Keratinocyte (primary cell): ENCODE measurements at regions of chr1 and their contacts with region 1.

Region 1: GRCh38 chr1:28845786-28846543 is 34.0 kb downstream of the OPRD1 start:
- DNase-seq: no peak
- H3K4me3 ChIP-seq: no peak overlapping the region
- H3K27ac ChIP-seq: no peak overlapping the region
- H3K4me1 ChIP-seq: no peaks in the 10 kb centered on the region
- H3K27me3 ChIP-seq: peaks cover 6% of the 10 kb centered on the region
- CTCF ChIP-seq: peak; percentile 11 to 42 (median 37)

Region 2: DNA sequence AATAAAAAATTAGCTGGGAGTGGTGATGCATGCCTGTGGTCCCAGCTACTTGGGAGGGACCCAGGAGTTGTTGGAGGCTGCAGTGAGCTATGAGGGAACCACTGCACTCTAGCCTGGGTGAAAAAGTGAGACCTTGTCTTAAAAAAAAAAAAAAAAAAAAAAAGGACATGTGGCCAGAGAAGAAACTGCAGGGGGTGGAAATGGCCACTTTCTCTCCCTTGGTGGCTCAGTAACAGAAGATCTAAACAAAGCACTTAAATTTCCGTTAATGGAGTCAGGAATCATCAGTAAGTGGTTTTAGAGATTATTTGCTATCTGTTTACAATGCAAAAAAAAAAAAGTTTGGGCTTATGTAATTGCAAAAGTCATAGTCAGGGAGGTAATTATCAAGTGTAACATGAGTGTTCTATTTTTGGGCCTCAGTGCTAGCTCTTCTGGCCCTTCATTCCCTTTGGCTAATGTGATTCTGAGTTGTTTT is 53.3 kb before region 1 on chr1:
- dilution Hi-C with region 1: loop called (anchors 10 kb)
- DNase-seq: no peak
- H3K4me3 ChIP-seq: no peak overlapping the region
- H3K27ac ChIP-seq: no peak overlapping the region
- H3K4me1 ChIP-seq: no peaks in the 10 kb centered on the region
- H3K27me3 ChIP-seq: peaks cover 11% of the 10 kb centered on the region
- CTCF ChIP-seq: peak in 1 of 3 experiments; percentile 8